ENCODE measurements at regions of chr9 and their contacts with region 1.

Region 1: DNA sequence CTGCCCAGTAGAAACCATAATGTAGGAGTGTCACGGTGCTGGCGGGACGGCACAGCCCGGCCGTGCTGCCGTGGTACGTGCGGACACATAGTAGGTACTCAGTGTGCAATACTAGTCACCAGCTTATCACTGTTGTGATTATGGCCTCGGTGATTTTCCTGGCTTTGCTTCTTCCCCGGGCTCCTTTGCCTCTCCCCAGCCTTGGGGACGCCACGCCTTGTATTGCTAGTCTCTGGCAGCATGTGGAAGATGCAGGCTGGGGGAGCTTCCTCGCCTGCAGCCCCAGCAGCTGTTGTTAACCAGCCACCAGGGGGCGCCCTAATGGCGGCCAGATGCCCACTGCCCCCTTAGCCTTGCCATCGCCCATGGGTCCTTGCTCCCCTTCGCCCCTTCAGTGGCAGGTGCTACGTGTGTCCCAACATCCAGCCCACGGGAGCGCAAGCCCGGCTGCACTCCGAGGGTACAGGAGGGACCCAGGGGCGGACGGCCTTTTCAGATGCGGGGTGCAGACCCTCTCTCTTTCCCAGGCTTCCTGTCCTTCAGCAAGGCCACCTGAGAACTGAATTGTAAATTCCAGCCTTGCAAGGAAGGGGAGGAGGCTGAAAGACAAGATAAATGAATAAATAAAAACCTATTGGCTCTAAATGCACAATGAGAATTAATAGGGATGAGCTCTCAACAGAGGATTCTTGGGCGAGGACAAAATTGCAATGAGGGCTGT is 8.0 kb downstream of the NTNG2 start:
- DNase-seq: peak; percentile 74
- H3K4me3 ChIP-seq: no peak overlapping the region
- H3K27ac ChIP-seq: no peak overlapping the region
- H3K4me1 ChIP-seq: no peaks in the 10 kb centered on the region
- CTCF ChIP-seq: peak; percentile 93

Region 2: DNA sequence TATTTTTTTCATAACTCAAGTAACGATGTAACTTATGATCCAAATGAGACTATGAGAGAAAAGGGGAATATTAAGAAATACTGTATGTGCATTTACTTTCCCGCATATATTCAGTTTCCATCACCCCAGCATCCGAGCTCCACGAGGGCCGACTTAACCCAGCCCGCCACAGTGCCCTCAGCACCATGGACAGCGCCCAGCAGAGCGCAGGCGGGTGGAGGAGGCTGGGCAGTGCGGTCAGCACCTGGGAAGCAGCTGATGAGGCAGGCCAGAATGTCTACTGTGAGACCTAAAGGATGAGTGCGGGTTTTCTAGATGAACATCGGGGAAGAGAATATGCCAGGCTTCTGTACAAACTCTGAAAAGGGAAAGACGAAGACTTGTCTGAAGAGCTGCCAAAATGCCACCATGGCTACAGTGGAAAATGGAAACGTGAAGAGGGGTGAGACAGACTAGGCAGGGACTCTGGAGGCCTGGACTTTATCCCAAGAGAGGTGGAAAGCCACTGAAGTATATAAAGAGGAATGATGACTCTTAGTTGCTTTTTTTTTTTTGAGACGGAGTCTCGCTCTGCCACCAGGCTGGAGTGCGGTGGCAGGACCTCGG is 55.6 kb before region 1 on chr9:
- CTCF ChIA-PET with region 1: no interaction called
- POLR2A ChIA-PET with region 1: no interaction called
- intact Hi-C with region 1: no loop called
- DNase-seq: no peak
- H3K4me3 ChIP-seq: no peak overlapping the region
- H3K27ac ChIP-seq: no peak overlapping the region
- H3K4me1 ChIP-seq: no peaks in the 10 kb centered on the region
- CTCF ChIP-seq: no peak

Region 3: GRCh38 chr9:132192728-132193127 is 22.9 kb after region 1 on chr9:
- CTCF ChIA-PET with region 1: no interaction called
- POLR2A ChIA-PET with region 1: no interaction called
- intact Hi-C with region 1: no loop called
- DNase-seq: no peak
- H3K4me3 ChIP-seq: no peak overlapping the region
- H3K27ac ChIP-seq: no peak overlapping the region
- H3K4me1 ChIP-seq: no peaks in the 10 kb centered on the region
- CTCF ChIP-seq: no peak

Region 4: DNA sequence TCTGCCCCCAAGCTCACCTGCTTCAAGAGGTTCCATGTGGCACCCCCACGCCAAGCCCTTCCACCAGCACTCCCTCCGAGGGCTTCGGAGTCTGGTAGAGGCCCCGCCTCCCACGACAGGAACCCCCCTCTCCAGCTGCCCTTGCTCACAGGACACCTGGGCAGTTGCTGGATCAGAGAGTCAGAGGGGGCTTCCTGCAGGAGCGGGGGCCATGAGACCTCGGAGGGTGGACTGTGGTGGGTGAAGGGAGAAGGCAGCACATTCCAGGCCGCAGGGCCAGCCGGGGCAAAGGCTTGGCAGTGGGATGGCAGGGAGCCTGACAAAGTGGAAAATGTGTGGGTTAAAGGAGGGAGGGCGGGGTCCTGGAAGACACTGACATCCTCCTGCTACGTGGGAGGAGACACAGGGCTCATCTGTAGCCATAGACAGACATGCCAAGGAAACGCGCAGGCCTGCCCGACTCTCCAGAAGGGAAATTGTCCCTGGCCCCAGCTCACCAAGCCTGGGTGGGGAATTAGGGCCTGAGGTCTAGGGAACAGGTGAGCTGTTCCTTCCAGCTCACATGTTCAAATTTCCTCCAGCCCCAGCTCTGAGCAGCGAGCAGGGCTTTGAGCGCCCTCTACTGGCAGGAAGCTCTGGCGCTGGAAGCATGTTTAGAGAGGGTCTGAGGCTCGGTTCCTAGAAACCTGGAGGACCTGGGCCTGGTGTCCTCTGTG is 66.3 kb after region 1 on chr9:
- CTCF ChIA-PET with region 1: interaction called, 5 read pairs
- POLR2A ChIA-PET with region 1: no interaction called
- intact Hi-C with region 1: loop called (anchors 1 kb)
- DNase-seq: peak; percentile 78
- H3K4me3 ChIP-seq: no peak overlapping the region
- H3K27ac ChIP-seq: no peak overlapping the region
- H3K4me1 ChIP-seq: no peaks in the 10 kb centered on the region
- CTCF ChIP-seq: peak; percentile 95

Region 5: DNA sequence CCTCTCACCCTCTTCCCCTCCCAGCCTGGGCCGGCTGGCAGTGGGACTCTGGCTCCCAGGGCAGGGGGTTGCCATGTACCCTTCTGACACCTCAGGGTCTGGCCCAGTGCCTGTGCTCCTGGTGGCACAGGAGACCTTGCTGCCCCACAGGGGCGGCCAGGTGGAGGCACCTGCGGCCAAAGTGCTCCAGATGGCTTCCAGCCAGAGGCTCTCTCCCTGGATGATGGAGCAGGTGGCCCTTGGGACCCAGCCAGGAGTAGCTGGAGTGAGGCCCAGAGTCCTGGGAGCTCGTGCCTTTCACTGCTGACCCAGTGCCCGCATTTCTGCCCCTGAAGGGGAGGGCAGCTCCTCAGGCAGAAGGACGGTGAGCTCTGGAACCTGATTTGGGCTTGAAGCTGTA is 79.3 kb after region 1 on chr9:
- CTCF ChIA-PET with region 1: no interaction called
- POLR2A ChIA-PET with region 1: no interaction called
- intact Hi-C with region 1: loop called (anchors 1 kb)
- DNase-seq: no peak
- H3K4me3 ChIP-seq: no peak overlapping the region
- H3K27ac ChIP-seq: no peak overlapping the region
- H3K4me1 ChIP-seq: no peaks in the 10 kb centered on the region
- CTCF ChIP-seq: no peak

Measured in OCI-LY7 (cell line).